ENCODE measurements at regions of chr7 and their contacts with region 1.

Region 1: GRCh38 chr7:122528879-122529481 is 169.9 kb downstream of the RNF133 start:
- DNase-seq: peak in 1 of 2 experiments; percentile 49
- H3K4me3 ChIP-seq: no peak overlapping the region
- H3K27ac ChIP-seq: no peak overlapping the region
- H3K4me1 ChIP-seq: no peaks in the 10 kb centered on the region
- H3K27me3 ChIP-seq: no peaks in the 10 kb centered on the region
- CTCF ChIP-seq: peak; percentile 78

Region 2: GRCh38 chr7:122014697-122015096 is 514.3 kb before region 1 on chr7:
- CTCF ChIA-PET with region 1: interaction called, 3 read pairs
- POLR2A ChIA-PET with region 1: no interaction called
- intact Hi-C with region 1: loop called (anchors 2 kb)
- DNase-seq: no peak
- H3K4me3 ChIP-seq: no peak overlapping the region
- H3K27ac ChIP-seq: no peak overlapping the region
- H3K4me1 ChIP-seq: no peaks in the 10 kb centered on the region
- H3K27me3 ChIP-seq: no peaks in the 10 kb centered on the region
- CTCF ChIP-seq: peak; percentile 61

Region 3: GRCh38 chr7:122092964-122093797 is 435.8 kb before region 1 on chr7:
- CTCF ChIA-PET with region 1: interaction called, 6 read pairs
- POLR2A ChIA-PET with region 1: no interaction called
- intact Hi-C with region 1: loop called (anchors 1 kb)
- DNase-seq: peak; percentile 42 to 62
- H3K4me3 ChIP-seq: no peak overlapping the region
- H3K27ac ChIP-seq: no peak overlapping the region
- H3K4me1 ChIP-seq: no peaks in the 10 kb centered on the region
- H3K27me3 ChIP-seq: no peaks in the 10 kb centered on the region
- CTCF ChIP-seq: peak; percentile 83

Region 4: DNA sequence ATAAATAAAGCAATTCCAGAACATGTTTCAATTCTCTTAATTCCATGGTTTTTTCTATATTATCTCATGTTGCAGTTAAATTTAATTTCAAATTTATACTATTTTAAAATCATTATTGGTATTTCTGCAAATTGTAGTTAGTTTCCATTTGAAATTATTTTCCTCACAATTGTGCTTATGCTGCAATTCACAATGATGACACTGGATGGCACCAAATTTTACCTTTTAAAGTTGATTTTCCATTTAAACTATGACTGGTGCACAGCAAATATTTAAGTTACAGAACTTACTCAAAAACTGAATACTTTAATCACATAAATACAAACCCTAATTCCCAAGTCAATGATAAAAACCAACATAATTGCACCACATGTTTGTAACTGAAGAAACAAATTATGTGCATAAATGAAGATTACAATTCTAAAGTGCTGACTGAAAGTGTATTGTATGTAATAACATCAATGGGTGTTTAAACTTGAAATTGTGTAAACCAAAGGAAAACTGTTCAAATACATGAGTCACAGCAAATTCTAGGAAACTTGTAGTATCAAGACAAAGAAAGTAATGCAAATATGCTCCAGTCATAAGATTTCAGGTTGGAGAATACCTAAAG is 309.6 kb before region 1 on chr7:
- CTCF ChIA-PET with region 1: interaction called, 3 read pairs
- POLR2A ChIA-PET with region 1: no interaction called
- intact Hi-C with region 1: loop called (anchors 1 kb)
- DNase-seq: no peak
- H3K4me3 ChIP-seq: no peak overlapping the region
- H3K27ac ChIP-seq: no peak overlapping the region
- H3K4me1 ChIP-seq: no peaks in the 10 kb centered on the region
- H3K27me3 ChIP-seq: no peaks in the 10 kb centered on the region
- CTCF ChIP-seq: peak; percentile 85

Region 5: DNA sequence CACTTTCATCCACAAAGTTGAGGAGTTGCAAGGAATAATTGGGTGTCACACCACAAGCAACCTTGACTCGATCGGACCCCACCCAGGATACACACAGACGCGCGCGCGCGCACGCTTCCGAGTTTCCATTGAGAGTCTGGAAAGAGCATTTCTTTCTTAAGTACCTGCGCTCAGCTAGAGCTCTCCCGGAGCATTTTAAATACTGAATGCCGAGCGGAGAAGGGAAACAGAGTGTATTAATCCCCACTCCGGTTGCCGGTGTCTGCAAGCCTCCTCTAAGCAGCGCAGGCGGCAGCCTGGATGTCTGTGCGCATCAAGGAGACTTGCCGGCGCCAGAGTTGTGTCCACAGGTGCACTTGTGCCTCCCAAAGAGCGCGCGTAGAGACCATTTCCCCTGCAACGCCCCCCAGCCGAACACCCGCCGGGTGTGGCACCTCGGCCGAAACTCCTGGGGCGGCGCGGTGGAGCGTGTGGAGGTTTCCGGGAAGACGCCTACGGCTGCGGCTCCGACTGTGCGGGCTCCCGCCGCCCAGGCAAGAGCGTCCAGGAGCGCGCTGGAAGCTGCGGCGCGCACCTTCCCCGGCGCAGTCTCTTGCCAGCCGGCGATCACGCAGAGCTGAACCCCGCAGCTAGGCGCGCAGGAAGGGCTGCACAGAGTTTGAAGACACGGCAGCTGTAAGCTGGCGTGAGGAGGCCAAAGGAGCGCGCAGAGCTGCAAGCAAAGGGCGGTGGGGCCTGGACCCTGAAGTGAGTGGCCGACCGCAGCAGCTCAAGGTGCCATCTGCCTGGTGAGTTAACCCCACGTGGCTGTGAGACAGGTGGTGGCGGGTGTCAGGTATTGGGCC is 223.3 kb before region 1 on chr7:
- CTCF ChIA-PET with region 1: no interaction called
- POLR2A ChIA-PET with region 1: no interaction called
- intact Hi-C with region 1: loop called (anchors 10 kb)
- DNase-seq: peak in 1 of 2 experiments; percentile 39
- H3K4me3 ChIP-seq: peak overlapping the region; percentile 67
- H3K27ac ChIP-seq: no peak overlapping the region
- H3K4me1 ChIP-seq: no peaks in the 10 kb centered on the region
- H3K27me3 ChIP-seq: 0 out of 2 replicates have a peak, but pooled peaks cover 2% of the 10 kb centered on the region
- CTCF ChIP-seq: no peak

Region 6: GRCh38 chr7:122442929-122443328 is 86.1 kb before region 1 on chr7:
- CTCF ChIA-PET with region 1: no interaction called
- POLR2A ChIA-PET with region 1: no interaction called
- intact Hi-C with region 1: no loop called
- DNase-seq: no peak
- H3K4me3 ChIP-seq: no peak overlapping the region
- H3K27ac ChIP-seq: no peak overlapping the region
- H3K4me1 ChIP-seq: no peaks in the 10 kb centered on the region
- H3K27me3 ChIP-seq: no peaks in the 10 kb centered on the region
- CTCF ChIP-seq: no peak

Region 7: GRCh38 chr7:122517576-122517975 is 11.4 kb before region 1 on chr7:
- CTCF ChIA-PET with region 1: interaction called, 12 read pairs
- POLR2A ChIA-PET with region 1: no interaction called
- intact Hi-C with region 1: no loop called
- DNase-seq: no peak
- H3K4me3 ChIP-seq: no peak overlapping the region
- H3K27ac ChIP-seq: no peak overlapping the region
- H3K4me1 ChIP-seq: no peaks in the 10 kb centered on the region
- H3K27me3 ChIP-seq: no peaks in the 10 kb centered on the region
- CTCF ChIP-seq: no peak

Region 8: GRCh38 chr7:122790132-122790531 is 261.2 kb after region 1 on chr7:
- CTCF ChIA-PET with region 1: no interaction called
- POLR2A ChIA-PET with region 1: no interaction called
- intact Hi-C with region 1: no loop called
- DNase-seq: no peak
- H3K4me3 ChIP-seq: no peak overlapping the region
- H3K27ac ChIP-seq: no peak overlapping the region
- H3K4me1 ChIP-seq: no peaks in the 10 kb centered on the region
- H3K27me3 ChIP-seq: no peaks in the 10 kb centered on the region
- CTCF ChIP-seq: no peak